ENCODE measurements at regions of chr22 and their contacts with region 1.

Region 1: GRCh38 chr22:49209452-49210195 is 618.0 kb downstream of the BRD1 start:
- DNase-seq: peak in 1 of 2 donors; percentile 14
- H3K4me3 ChIP-seq: no peak overlapping the region
- H3K27ac ChIP-seq: no peak overlapping the region
- H3K4me1 ChIP-seq: no peaks in the 10 kb centered on the region
- H3K27me3 ChIP-seq: peaks cover 0 to 37% of the 10 kb centered on the region in 2 donors
- CTCF ChIP-seq: no peak
- POLR2A ChIP-seq: no peak

Region 2: GRCh38 chr22:49149721-49150608 is 59.7 kb before region 1 on chr22:
- intact Hi-C with region 1: loop called (anchors 10 kb)
- DNase-seq: no peak
- H3K4me3 ChIP-seq: no peak overlapping the region
- H3K27ac ChIP-seq: no peak overlapping the region
- H3K4me1 ChIP-seq: no peaks in the 10 kb centered on the region
- H3K27me3 ChIP-seq: peaks cover 0 to 56% of the 10 kb centered on the region in 2 donors
- CTCF ChIP-seq: no peak
- POLR2A ChIP-seq: no peak

Region 3: DNA sequence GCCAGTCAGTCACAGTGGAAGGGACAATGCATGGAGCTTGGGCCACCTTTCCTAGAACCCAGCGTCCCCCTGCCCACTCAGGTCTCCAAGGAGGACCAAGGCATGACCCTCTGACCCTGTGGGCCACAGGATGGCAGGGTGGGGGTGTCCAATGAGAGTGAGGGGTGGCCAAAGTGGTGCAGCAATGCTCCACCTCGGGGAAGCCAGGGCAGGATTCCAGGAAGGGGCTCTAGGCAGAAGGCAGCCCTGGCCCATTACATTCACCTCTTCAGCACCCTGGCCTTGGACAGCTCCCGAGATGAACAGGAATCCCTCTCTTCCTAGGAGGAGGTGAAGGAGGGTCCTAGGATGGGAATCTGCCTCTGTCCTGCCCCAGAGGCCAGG is 20.6 kb after region 1 on chr22:
- intact Hi-C with region 1: no loop called
- DNase-seq: peak; percentile 12 to 28
- H3K4me3 ChIP-seq: no peak overlapping the region
- H3K27ac ChIP-seq: no peak overlapping the region
- H3K4me1 ChIP-seq: no peaks in the 10 kb centered on the region
- H3K27me3 ChIP-seq: peaks cover 0 to 31% of the 10 kb centered on the region in 2 donors
- CTCF ChIP-seq: no peak
- POLR2A ChIP-seq: no peak